Posterior cingulate gyrus (tissue), 11 donors: ENCODE measurements at regions of chr17 and their contacts with region 1.

Region 1: GRCh38 chr17:4215882-4216570 is 47.8 kb downstream of the ANKFY1 start:
- DNase-seq: peak in 1 of 10 donors; percentile 60

Region 2: DNA sequence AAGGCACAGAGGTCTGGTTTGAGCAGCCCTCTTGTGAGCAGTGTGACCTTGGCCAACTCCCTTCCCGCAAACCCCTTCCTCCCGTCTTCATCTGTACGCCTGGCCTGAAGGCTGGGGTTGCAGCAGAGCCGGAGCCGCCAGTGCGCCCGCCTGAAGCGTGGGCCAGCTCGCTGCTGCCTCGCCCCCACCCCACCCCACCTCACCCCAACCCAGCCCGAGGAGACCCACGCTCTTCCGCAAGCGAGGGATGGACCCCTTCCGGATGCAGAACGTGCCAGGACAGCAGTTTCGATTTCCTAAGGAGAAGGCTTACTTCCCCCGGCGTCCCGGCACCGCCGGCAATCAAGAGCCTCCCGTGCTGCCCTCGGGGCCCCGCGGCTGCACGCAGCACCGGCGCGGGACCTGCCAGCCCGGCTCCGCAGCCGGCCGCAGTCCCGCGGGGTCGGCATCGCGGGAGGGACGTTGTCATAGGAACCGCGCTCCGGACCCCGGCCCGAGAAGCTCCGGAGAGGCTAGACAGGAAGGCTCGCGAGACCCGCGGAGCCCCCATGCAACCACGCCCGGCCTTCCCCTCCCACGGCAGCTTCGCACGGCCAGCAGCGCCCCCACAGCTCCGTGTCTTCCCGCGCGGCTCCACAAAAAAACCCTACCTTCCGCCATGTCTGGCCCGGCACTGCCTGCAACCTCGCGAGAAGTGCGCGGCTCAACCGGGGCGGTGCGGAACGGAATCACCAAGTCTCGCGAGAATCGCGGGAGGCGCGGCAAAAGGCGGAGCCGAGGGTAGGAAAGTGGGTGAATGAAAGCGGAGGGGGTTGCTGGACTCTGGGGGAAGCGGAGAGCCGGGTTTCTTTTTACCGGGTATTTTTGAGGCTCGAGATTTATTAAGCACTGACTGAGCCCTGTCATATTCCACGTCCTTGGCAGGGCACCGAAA is 47.5 kb after region 1 on chr17 and contains the start of gene ANKFY1:
- intact Hi-C with region 1: loop called (anchors 5 kb)
- DNase-seq: peak; percentile 93 to 99 (median 98)

Region 3: DNA sequence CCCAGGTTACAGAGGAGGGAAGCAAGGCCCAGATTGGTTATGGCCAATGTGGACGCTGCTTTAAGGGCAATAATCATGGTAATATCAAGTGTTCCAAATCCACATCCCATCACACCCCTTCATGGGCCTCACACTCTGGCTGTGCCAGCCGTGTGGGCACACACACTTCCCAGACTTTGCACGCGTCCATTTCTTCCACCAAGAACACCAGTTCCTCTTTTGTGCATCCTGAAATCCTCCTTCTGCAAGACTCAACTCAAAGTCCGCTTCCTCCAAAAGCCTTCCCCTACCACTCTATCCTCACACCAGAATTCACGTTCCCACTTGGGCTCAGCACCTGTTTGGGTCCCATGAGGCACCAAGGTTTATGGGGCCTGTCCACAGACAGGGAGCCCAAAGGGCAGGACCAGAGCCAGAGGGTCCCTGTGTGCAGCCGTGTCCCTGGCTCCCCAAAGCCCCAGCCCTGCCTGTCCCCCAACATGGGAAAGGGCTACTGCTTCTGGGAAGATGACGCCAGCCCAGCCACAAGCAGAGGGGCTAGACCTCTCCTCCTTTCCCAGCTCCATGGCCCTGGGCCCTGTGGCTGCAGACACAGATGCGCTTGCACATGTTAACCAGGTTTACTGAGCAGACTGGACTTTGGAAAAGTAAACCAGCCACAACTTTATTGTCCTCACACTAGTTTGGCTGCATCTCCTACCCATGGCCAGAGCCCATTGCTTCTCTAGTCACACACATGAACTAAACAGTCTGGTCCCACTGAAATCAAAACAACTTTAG is 238.0 kb after region 1 on chr17:
- intact Hi-C with region 1: no loop called
- DNase-seq: peak in 2 of 10 donors; percentile 41 to 50